Natural killer cell (primary cell): ENCODE measurements at regions of chr20 and their contacts with region 1.

Region 1: GRCh38 chr20:63980806-63981728 is at the start of gene PRPF6:
- DNase-seq: peak; percentile 92 to 99
- ATAC-seq: peak; percentile 61 to 86 (median 77)
- H3K4me3 ChIP-seq: peak within 1 kb of the TSS; percentile 62
- H3K4me3 Mint-ChIP-seq: peak within 1 kb of the TSS; percentile 95
- H3K27ac ChIP-seq: peak within 1 kb of the TSS; percentile 78
- H3K27ac Mint-ChIP-seq: peak within 1 kb of the TSS; percentile 88 to 95
- H3K4me1 ChIP-seq: peaks cover 54% of the 10 kb centered on the region
- H3K4me1 Mint-ChIP-seq: peaks cover 59 to 67% of the 10 kb centered on the region in 2 donors
- H3K27me3 ChIP-seq: no peaks in the 10 kb centered on the region
- H3K27me3 Mint-ChIP-seq: no peaks in the 10 kb centered on the region
- CTCF ChIP-seq: peak; percentile 90
- total RNA-seq, gene PRPF6: 52.7 to 63.0 (median 55.0) TPM

Region 2: GRCh38 chr20:63955827-63956663 is 25.0 kb before region 1 on chr20 and contains the start of gene UCKL1:
- intact Hi-C with region 1: loop called (anchors 2 kb)
- DNase-seq: peak; percentile 88 to 93
- ATAC-seq: peak; percentile 86 to 94 (median 86)
- H3K4me3 ChIP-seq: peak within 1 kb of the TSS; percentile 65
- H3K4me3 Mint-ChIP-seq: peak within 1 kb of the TSS; percentile 87
- H3K27ac ChIP-seq: peak within 1 kb of the TSS; percentile 34
- H3K27ac Mint-ChIP-seq: peak within 1 kb of the TSS; percentile 59 to 73
- H3K4me1 ChIP-seq: peaks cover 33% of the 10 kb centered on the region
- H3K4me1 Mint-ChIP-seq: peaks cover 6 to 17% of the 10 kb centered on the region in 2 donors
- H3K27me3 ChIP-seq: no peaks in the 10 kb centered on the region
- H3K27me3 Mint-ChIP-seq: no peaks in the 10 kb centered on the region
- CTCF ChIP-seq: no peak
- total RNA-seq, gene UCKL1: 49.9 to 58.1 (median 49.9) TPM